ENCODE measurements at regions of chr2 and their contacts with region 1.

Region 1: GRCh38 chr2:98731041-98731893 is at the start of gene MGAT4A:
- DNase-seq: peak; percentile 87
- ATAC-seq: peak; percentile 80
- H3K4me3 Mint-ChIP-seq: peak within 1 kb of the TSS; percentile 88
- H3K27ac Mint-ChIP-seq: peak within 1 kb of the TSS; percentile 93
- H3K4me1 Mint-ChIP-seq: peaks cover 67% of the 10 kb centered on the region
- H3K27me3 Mint-ChIP-seq: no peaks in the 10 kb centered on the region
- total RNA-seq, gene MGAT4A: 49.4 to 67.5 TPM

Region 2: GRCh38 chr2:98465456-98466226 is 265.6 kb before region 1 on chr2:
- CTCF ChIA-PET with region 1: no interaction called
- POLR2A ChIA-PET with region 1: no interaction called
- intact Hi-C with region 1: loop called in 1 of 2 experiments (anchors 5 kb)
- DNase-seq: peak; percentile 78
- ATAC-seq: peak; percentile 16
- H3K4me3 Mint-ChIP-seq: peak overlapping the region; percentile 69
- H3K27ac Mint-ChIP-seq: peak overlapping the region; percentile 96
- H3K4me1 Mint-ChIP-seq: peaks cover 90% of the 10 kb centered on the region
- H3K27me3 Mint-ChIP-seq: no peaks in the 10 kb centered on the region

Region 3: GRCh38 chr2:98654699-98655495 is 76.4 kb before region 1 on chr2:
- CTCF ChIA-PET with region 1: interaction called, 14 read pairs
- POLR2A ChIA-PET with region 1: interaction called, 6 read pairs
- intact Hi-C with region 1: loop called (anchors 2 kb)
- DNase-seq: peak; percentile 48
- ATAC-seq: peak; percentile 38
- H3K4me3 Mint-ChIP-seq: peak overlapping the region; percentile 42
- H3K27ac Mint-ChIP-seq: peak overlapping the region; percentile 72
- H3K4me1 Mint-ChIP-seq: peaks cover 80% of the 10 kb centered on the region
- H3K27me3 Mint-ChIP-seq: no peaks in the 10 kb centered on the region

Region 4: DNA sequence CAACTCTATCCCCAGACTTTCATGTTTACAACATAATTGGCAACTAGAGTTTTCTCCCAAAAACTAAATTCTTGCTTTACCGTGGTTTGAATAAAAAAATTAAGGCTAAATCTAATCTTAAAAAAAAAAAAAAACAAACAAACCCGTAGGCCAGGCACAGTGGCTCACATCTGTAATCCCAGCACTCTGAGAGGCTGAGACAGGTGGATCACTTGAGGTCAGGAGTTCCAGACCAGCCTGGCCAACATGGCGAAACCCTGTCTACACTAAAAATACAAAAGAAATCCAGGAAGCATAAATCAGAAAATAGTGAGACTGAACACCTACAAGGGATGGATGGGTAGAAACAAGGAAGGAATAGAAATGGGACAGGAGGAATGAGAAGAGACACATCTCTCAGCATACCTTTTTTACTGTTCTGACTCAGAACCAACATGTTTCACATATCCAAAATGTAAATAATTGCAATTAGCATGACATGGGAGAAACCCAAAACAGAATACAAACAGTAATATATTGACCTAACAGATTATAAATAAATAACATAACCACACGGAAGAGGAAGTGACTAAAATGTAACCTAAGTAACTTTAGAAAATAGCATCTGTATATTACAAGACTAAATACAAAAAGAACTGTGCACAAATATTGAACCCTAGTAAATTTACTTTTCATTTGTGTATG is 17.8 kb before region 1 on chr2:
- CTCF ChIA-PET with region 1: interaction called, 9 read pairs
- POLR2A ChIA-PET with region 1: interaction called, 3 read pairs
- intact Hi-C with region 1: loop called (anchors 1 to 2 kb)
- DNase-seq: no peak
- ATAC-seq: no peak
- H3K4me3 Mint-ChIP-seq: no peak overlapping the region
- H3K27ac Mint-ChIP-seq: peak overlapping the region; percentile 51
- H3K4me1 Mint-ChIP-seq: peaks cover 94% of the 10 kb centered on the region
- H3K27me3 Mint-ChIP-seq: no peaks in the 10 kb centered on the region

Region 5: GRCh38 chr2:98822301-98823164 is 91.3 kb after region 1 on chr2:
- CTCF ChIA-PET with region 1: interaction called, 4 read pairs
- POLR2A ChIA-PET with region 1: no interaction called
- intact Hi-C with region 1: loop called in 1 of 2 experiments (anchors 5 kb)
- DNase-seq: peak; percentile 82
- ATAC-seq: peak; percentile 94
- H3K4me3 Mint-ChIP-seq: peak overlapping the region; percentile 23
- H3K27ac Mint-ChIP-seq: no peak overlapping the region
- H3K4me1 Mint-ChIP-seq: peaks cover 7% of the 10 kb centered on the region
- H3K27me3 Mint-ChIP-seq: peaks cover 2% of the 10 kb centered on the region

Region 6: GRCh38 chr2:99141110-99142108 is 410.1 kb after region 1 on chr2 and contains the start of gene C2orf15:
- CTCF ChIA-PET with region 1: no interaction called
- POLR2A ChIA-PET with region 1: no interaction called
- intact Hi-C with region 1: loop called in 1 of 2 experiments (anchors 1 kb)
- DNase-seq: peak; percentile 98
- ATAC-seq: peak; percentile 95
- H3K4me3 Mint-ChIP-seq: peak within 1 kb of the TSS; percentile 94
- H3K27ac Mint-ChIP-seq: peak within 1 kb of the TSS; percentile 86
- H3K4me1 Mint-ChIP-seq: peaks cover 16% of the 10 kb centered on the region
- H3K27me3 Mint-ChIP-seq: no peaks in the 10 kb centered on the region
- total RNA-seq, gene C2orf15: 0.87 to 1.1 TPM

Measured in activated CD4-positive, alpha-beta T cell treated with anti-CD3 and anti-CD28 coated beads for 36 hours (primary cell).